Naive thymus-derived CD4-positive, alpha-beta T cell (primary cell): ENCODE measurements at regions of chr16 and their contacts with region 1.

Region 1: DNA sequence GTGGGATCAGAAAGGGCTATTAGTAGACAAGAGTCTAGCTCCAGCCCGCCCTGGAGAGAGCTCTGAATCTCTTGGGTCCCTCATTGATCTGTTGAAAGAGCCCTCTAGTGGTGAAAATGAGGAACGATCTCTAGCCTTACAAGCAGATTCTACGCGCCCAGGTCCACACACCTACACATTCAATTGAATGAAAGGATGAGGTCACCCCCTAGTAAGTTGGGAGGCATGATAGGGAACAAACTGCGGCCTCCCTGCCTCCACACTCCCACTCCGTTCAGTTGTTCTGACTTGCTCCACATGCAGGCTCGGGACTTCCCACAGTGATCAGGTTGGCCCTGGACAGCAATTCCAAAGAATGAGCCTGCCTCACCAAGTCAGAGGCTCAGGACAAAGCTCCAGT is 2.9 kb upstream of the CACNG3 start:
- DNase-seq: peak in 8 of 9 donors; percentile 10 to 55 (median 39)
- ATAC-seq: peak; percentile 64
- H3K4me3 ChIP-seq: no peak overlapping the region
- H3K4me3 Mint-ChIP-seq: no peak overlapping the region
- H3K27ac ChIP-seq: no peak overlapping the region
- H3K27ac Mint-ChIP-seq: no peak overlapping the region
- H3K4me1 ChIP-seq: no peaks in the 10 kb centered on the region
- H3K4me1 Mint-ChIP-seq: peaks cover 0 to 3% (median 0%) of the 10 kb centered on the region in 7 donors
- H3K27me3 ChIP-seq: peaks cover 5 to 16% of the 10 kb centered on the region in 2 donors
- H3K27me3 Mint-ChIP-seq: peaks cover 46 to 64% (median 52%) of the 10 kb centered on the region in 5 donors

Region 2: DNA sequence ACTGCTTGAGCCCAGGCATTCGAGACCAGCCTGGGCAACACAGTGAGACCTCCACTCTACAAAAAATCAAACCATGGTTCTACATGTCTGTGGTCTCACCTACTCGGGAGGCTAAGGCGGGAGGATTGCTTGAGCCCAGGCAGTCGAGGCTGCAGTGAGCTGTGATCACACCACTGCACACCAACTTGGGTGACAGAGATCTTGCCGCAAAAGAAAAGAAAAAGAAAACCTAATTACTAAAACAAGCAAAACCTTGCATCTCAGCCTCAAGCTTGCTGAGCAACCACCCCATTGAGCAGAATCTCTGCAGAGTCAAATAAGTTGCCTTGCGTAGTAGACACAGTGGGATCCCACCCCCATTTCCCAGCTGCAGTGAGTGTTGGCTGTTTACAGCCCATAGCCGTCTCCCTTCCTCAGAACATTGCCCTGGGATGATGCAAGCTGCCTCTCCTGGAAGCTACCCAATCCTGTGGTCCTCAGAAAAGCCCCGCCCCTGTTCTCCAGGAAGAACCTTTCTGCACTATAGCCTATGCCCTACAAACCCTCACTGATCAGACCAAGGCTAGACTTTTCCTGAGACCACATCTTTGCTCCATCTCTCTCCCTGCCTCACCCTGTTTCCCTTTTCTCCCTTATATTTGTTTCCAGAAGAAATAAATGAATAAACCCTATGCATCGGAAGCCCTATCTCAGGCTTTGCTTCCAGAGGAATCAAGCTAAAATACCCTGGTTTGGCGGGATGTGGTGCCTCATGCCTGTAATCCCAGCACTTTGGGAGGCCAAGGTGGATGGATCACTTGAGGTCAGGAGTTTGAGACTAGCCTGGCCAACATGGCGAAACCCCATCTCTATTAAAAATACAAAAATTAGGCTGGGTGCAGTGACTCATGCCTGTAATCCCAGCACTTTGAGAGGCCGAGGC is 523.4 kb before region 1 on chr16:
- CTCF ChIA-PET with region 1: no interaction called
- POLR2A ChIA-PET with region 1: no interaction called
- intact Hi-C with region 1: loop called in 1 of 2 experiments (anchors 10 kb)
- DNase-seq: no peak
- ATAC-seq: no peak
- H3K4me3 ChIP-seq: no peak overlapping the region
- H3K4me3 Mint-ChIP-seq: no peak overlapping the region
- H3K27ac ChIP-seq: no peak overlapping the region
- H3K27ac Mint-ChIP-seq: no peak overlapping the region
- H3K4me1 ChIP-seq: no peaks in the 10 kb centered on the region
- H3K4me1 Mint-ChIP-seq: peaks cover 0 to 8% (median 4%) of the 10 kb centered on the region in 7 donors
- H3K27me3 ChIP-seq: no peaks in the 10 kb centered on the region
- H3K27me3 Mint-ChIP-seq: peaks cover 4 to 23% (median 13%) of the 10 kb centered on the region in 5 donors

Region 3: DNA sequence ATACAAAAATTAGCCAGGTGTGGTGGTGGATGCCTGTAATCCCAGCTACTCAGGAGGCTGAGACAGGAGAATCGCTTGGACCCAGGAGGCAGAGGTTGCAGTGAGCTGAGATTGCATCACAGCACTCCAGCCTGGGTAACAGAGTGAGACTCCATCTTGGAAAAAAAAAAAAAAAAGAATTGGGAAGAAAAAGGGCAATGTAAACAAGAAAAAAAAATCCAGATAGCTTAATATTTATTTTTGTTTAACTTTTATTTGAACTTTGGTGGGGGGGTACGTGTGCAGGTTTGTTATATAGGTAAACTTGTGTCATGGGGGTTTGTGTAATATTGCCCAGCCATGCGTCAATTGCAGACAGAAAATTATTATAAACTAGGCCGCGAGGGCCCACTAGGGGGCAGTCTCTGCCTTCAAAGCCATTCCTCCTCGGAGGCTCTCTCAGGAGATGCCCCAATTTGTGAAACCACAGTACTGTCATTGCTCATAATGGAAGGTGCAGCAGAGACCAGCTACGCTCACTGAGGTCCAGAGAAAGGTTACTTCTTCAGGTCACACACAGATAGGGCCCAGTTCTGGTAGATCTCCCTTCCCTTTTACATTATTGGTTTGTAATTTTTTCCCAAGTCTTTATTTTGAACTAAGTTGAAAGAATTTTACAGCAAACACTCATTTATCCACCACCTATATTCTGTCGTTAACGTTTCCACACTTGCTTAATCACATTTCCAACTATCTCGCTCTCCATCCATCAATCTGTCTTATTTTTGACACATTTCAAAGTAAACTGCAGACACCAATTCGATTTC is 211.2 kb before region 1 on chr16:
- CTCF ChIA-PET with region 1: interaction called, 4 read pairs
- POLR2A ChIA-PET with region 1: no interaction called
- intact Hi-C with region 1: loop called in 1 of 2 experiments (anchors 1 kb)
- DNase-seq: peak; percentile 37 to 78 (median 62)
- ATAC-seq: peak; percentile 96
- H3K4me3 ChIP-seq: no peak overlapping the region
- H3K4me3 Mint-ChIP-seq: peak overlapping the region in 1 of 10 donors; percentile 21
- H3K27ac ChIP-seq: no peak overlapping the region
- H3K27ac Mint-ChIP-seq: no peak overlapping the region
- H3K4me1 ChIP-seq: no peaks in the 10 kb centered on the region
- H3K4me1 Mint-ChIP-seq: peaks cover 0 to 24% (median 5%) of the 10 kb centered on the region in 7 donors
- H3K27me3 ChIP-seq: no peaks in the 10 kb centered on the region
- H3K27me3 Mint-ChIP-seq: no peaks in the 10 kb centered on the region

Region 4: GRCh38 chr16:24504472-24505345 is 251.5 kb after region 1 on chr16:
- CTCF ChIA-PET with region 1: interaction called, 4 read pairs
- POLR2A ChIA-PET with region 1: no interaction called
- intact Hi-C with region 1: loop called (anchors 1 to 2 kb)
- DNase-seq: peak; percentile 21 to 65 (median 50)
- ATAC-seq: peak; percentile 89
- H3K4me3 ChIP-seq: no peak overlapping the region
- H3K4me3 Mint-ChIP-seq: no peak overlapping the region
- H3K27ac ChIP-seq: no peak overlapping the region
- H3K27ac Mint-ChIP-seq: no peak overlapping the region
- H3K4me1 ChIP-seq: no peaks in the 10 kb centered on the region
- H3K4me1 Mint-ChIP-seq: peaks cover 0 to 4% (median 0%) of the 10 kb centered on the region in 7 donors
- H3K27me3 ChIP-seq: no peaks in the 10 kb centered on the region
- H3K27me3 Mint-ChIP-seq: peaks cover 4 to 17% (median 13%) of the 10 kb centered on the region in 5 donors